CD4-positive, alpha-beta memory T cell (primary cell): ENCODE measurements at regions of chr12 and their contacts with region 1.

Region 1: GRCh38 chr12:12474931-12475795 is 87.5 kb downstream of the DUSP16 start:
- DNase-seq: peak; percentile 76 to 82 (median 80)
- H3K4me3 ChIP-seq: peak overlapping the region; percentile 25 to 51
- H3K4me3 Mint-ChIP-seq: peak overlapping the region; percentile 67 to 89 (median 82)
- H3K27ac ChIP-seq: peak overlapping the region; percentile 81
- H3K27ac Mint-ChIP-seq: peak overlapping the region; percentile 91 to 99 (median 98)
- H3K4me1 ChIP-seq: peaks cover 64% of the 10 kb centered on the region
- H3K4me1 Mint-ChIP-seq: peaks cover 44 to 87% (median 65%) of the 10 kb centered on the region in 4 donors
- H3K27me3 ChIP-seq: no peaks in the 10 kb centered on the region
- H3K27me3 Mint-ChIP-seq: no peaks in the 10 kb centered on the region

Region 2: DNA sequence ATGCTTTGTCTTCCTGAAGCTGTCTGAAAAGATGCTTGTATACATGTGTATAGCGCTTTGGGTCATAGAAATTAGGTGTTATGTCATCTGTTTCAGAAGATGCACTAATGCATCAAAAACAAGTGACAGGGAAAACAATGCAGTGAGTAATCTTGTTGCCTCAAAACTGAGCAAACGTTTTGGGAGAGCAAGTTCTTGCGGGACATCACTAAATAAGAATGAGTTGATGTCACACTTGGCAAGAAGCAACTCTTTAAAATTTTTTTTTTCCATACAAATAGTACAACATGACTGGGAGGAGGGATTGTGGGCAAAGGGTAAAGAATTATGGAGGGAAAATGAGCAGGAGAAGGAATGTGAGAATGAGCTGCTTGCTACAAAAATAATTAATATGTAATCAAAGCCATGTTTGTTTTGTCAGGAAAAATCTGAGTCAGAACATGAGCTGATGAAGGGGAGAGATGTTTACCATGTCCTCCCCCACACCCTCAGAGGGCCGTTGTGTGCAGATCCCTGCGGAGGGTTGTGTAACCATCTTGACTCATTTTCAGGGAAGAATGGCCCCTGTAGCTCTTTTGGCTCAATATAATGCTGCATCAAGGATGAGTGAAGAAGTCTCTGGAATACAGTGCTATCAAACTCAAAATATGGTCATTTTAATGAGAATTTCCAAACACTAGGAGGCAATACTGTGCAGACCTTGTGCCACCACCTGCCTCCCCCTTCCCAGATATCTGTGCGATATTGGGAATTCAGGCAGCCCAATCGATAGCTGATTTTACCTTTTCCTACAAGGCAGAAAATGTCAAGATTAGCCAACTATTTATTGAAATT is 76.9 kb before region 1 on chr12:
- CTCF ChIA-PET with region 1: interaction called, 3 read pairs
- POLR2A ChIA-PET with region 1: interaction called, 10 read pairs
- intact Hi-C with region 1: no loop called
- DNase-seq: no peak
- H3K4me3 ChIP-seq: no peak overlapping the region
- H3K4me3 Mint-ChIP-seq: no peak overlapping the region
- H3K27ac ChIP-seq: no peak overlapping the region
- H3K27ac Mint-ChIP-seq: peak overlapping the region in 4 of 7 donors; percentile 32 to 71 (median 61)
- H3K4me1 ChIP-seq: peaks cover 26% of the 10 kb centered on the region
- H3K4me1 Mint-ChIP-seq: peaks cover 26 to 64% (median 50%) of the 10 kb centered on the region in 4 donors
- H3K27me3 ChIP-seq: no peaks in the 10 kb centered on the region
- H3K27me3 Mint-ChIP-seq: no peaks in the 10 kb centered on the region

Region 3: GRCh38 chr12:12408265-12408690 is 66.9 kb before region 1 on chr12:
- CTCF ChIA-PET with region 1: no interaction called
- POLR2A ChIA-PET with region 1: no interaction called
- intact Hi-C with region 1: no loop called
- DNase-seq: peak in 4 of 5 donors; percentile 29 to 47 (median 34)
- H3K4me3 ChIP-seq: no peak overlapping the region
- H3K4me3 Mint-ChIP-seq: peak overlapping the region in 3 of 8 donors; percentile 0 to 14 (median 7)
- H3K27ac ChIP-seq: no peak overlapping the region
- H3K27ac Mint-ChIP-seq: peak overlapping the region; percentile 8 to 71 (median 56)
- H3K4me1 ChIP-seq: peaks cover 28% of the 10 kb centered on the region
- H3K4me1 Mint-ChIP-seq: peaks cover 19 to 52% (median 38%) of the 10 kb centered on the region in 4 donors
- H3K27me3 ChIP-seq: no peaks in the 10 kb centered on the region
- H3K27me3 Mint-ChIP-seq: no peaks in the 10 kb centered on the region

Region 4: GRCh38 chr12:12442548-12443071 is 32.6 kb before region 1 on chr12:
- CTCF ChIA-PET with region 1: interaction called, 63 read pairs
- POLR2A ChIA-PET with region 1: interaction called, 113 read pairs
- intact Hi-C with region 1: loop called (anchors 1 kb)
- DNase-seq: no peak
- H3K4me3 ChIP-seq: no peak overlapping the region
- H3K4me3 Mint-ChIP-seq: peak overlapping the region in 6 of 8 donors; percentile 8 to 85 (median 70)
- H3K27ac ChIP-seq: peak overlapping the region; percentile 65
- H3K27ac Mint-ChIP-seq: peak overlapping the region; percentile 90 to 99 (median 98)
- H3K4me1 ChIP-seq: peaks cover 95% of the 10 kb centered on the region
- H3K4me1 Mint-ChIP-seq: peaks cover 68 to 93% (median 80%) of the 10 kb centered on the region in 4 donors
- H3K27me3 ChIP-seq: no peaks in the 10 kb centered on the region
- H3K27me3 Mint-ChIP-seq: no peaks in the 10 kb centered on the region

Region 5: DNA sequence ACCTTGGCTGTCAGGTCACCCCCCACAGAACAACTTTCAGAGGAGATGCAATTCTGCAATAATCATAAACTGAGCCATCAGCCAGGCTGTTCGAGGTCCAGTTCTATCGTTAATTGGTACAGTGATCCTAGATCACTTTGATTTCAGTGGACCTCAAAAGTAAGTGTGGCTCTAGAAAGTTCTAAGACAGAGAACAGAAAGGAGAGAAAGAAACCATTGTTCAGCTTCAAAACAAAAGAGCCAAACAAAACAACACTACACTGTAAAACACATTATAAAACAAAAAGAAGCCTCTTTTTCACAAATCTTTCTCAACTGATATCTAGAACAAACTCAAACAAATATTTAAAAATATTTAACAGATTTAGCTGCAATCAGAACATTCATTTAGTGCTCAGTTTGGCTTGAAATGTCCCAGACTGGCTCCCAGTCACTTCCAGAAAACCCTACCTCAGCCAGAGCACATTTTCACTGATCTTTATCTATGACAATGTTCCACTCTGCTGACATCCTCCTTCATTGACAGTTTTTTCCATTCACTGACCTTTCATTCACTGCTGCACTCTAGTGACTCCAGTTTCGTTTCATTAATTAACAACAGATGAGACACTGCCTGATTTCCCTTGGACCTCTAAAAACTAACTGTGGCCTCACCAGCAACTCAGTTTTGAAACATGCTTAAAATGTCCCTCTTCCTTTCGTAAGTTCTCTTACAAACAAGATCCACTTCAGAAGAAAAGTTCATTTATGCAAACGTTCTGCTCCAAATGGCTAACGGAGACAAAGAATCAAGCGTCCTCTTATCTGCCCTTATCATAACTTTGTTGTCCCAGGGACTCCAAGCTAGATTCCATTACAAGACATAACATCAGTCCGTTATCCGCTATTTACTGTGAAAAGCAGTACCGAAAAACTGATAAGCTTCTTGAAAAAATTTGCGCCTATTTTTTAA is 30.7 kb after region 1 on chr12:
- CTCF ChIA-PET with region 1: interaction called, 30 read pairs
- POLR2A ChIA-PET with region 1: interaction called, 970 read pairs
- intact Hi-C with region 1: loop called (anchors 2 kb)
- DNase-seq: peak in 4 of 5 donors; percentile 28 to 42 (median 32)
- H3K4me3 ChIP-seq: no peak overlapping the region
- H3K4me3 Mint-ChIP-seq: peak overlapping the region in 7 of 8 donors; percentile 37 to 84 (median 73)
- H3K27ac ChIP-seq: peak overlapping the region; percentile 48
- H3K27ac Mint-ChIP-seq: peak overlapping the region; percentile 66 to 95 (median 90)
- H3K4me1 ChIP-seq: peaks cover 65% of the 10 kb centered on the region
- H3K4me1 Mint-ChIP-seq: peaks cover 53 to 77% (median 61%) of the 10 kb centered on the region in 4 donors
- H3K27me3 ChIP-seq: no peaks in the 10 kb centered on the region
- H3K27me3 Mint-ChIP-seq: no peaks in the 10 kb centered on the region

Region 6: DNA sequence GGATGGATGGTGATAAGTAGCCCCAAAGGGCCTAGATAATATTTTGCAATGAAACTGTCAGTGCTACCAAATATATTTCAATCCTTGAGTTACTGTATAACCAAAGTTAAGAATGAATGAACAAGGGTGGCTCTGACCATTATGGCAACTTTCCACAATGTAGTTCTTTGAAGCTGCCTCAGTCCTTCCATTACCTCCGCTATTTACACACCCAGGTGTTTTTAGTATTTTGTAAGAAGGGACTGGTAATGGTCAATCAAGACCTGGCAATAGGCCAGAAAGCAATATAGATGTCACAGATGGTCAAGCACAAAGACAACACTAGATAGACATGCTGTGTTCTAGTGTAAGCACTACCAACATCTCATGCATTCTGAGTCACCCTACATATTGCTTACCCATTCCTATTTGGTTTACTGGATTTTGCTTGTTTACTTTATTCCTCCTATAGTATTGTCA is 71.2 kb after region 1 on chr12:
- CTCF ChIA-PET with region 1: no interaction called
- POLR2A ChIA-PET with region 1: no interaction called
- intact Hi-C with region 1: no loop called
- DNase-seq: no peak
- H3K4me3 ChIP-seq: no peak overlapping the region
- H3K4me3 Mint-ChIP-seq: no peak overlapping the region
- H3K27ac ChIP-seq: no peak overlapping the region
- H3K27ac Mint-ChIP-seq: peak overlapping the region in 2 of 7 donors; percentile 22 to 51
- H3K4me1 ChIP-seq: peaks cover 12% of the 10 kb centered on the region
- H3K4me1 Mint-ChIP-seq: peaks cover 22 to 58% (median 40%) of the 10 kb centered on the region in 4 donors
- H3K27me3 ChIP-seq: no peaks in the 10 kb centered on the region
- H3K27me3 Mint-ChIP-seq: no peaks in the 10 kb centered on the region

Region 7: GRCh38 chr12:12724661-12725545 is 249.7 kb after region 1 on chr12:
- CTCF ChIA-PET with region 1: interaction called, 4 read pairs
- POLR2A ChIA-PET with region 1: interaction called, 238 read pairs
- intact Hi-C with region 1: loop called (anchors 5 kb)
- DNase-seq: peak; percentile 93 to 97 (median 96)
- H3K4me3 ChIP-seq: peak overlapping the region in 1 of 2 donors; percentile 80
- H3K4me3 Mint-ChIP-seq: peak overlapping the region; percentile 89 to 96 (median 92)
- H3K27ac ChIP-seq: peak overlapping the region; percentile 95
- H3K27ac Mint-ChIP-seq: peak overlapping the region; percentile 95 to 99 (median 97)
- H3K4me1 ChIP-seq: peaks cover 56% of the 10 kb centered on the region
- H3K4me1 Mint-ChIP-seq: peaks cover 37 to 72% (median 43%) of the 10 kb centered on the region in 4 donors
- H3K27me3 ChIP-seq: no peaks in the 10 kb centered on the region
- H3K27me3 Mint-ChIP-seq: peaks cover 0 to 1% of the 10 kb centered on the region in 2 donors